Posterior vena cava (tissue), 2 donors: ENCODE measurements at regions of chr6 and their contacts with region 1.

Region 1: GRCh38 chr6:125367036-125367782 is 65.4 kb upstream of the HDDC2 start:
- DNase-seq: peak; percentile 68

Region 2: GRCh38 chr6:125346201-125346925 is 20.8 kb before region 1 on chr6:
- intact Hi-C with region 1: loop called in 1 of 2 experiments (anchors 2 kb)
- DNase-seq: no peak